WTC11 (cell line): ENCODE measurements at regions of chr18 and their contacts with region 1.

Region 1: DNA sequence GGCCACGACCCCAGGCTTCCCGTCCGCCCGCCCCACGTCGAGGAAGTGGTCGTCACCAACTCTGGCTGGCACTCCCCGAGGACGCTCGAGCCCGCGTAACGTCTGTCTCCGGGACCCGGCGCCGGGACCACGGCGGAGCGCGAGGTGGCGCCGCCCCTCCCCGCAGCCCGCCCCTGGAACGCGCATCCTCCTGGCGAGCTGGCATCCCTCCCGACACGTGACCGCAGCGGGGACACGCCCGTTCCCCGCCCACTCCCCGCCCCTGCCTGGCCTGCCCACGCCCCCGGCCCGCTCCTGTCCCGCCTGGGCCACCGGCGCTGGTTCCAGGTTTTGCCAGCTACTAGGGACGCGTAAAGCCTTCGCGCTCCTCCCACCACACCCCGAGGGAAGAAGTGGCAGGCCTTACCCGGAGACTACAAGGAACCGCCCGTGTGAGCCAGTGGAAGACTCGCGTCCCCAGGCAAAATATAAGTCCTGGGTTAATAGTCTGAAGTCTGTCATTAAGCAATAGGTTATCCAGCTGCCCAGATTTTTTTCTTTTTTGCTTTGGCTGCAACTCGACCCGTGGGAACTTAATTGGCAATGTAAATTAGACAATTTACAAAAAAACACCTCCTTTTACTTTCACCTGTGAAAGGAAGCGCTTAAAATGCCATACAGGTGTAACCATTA is at the start of gene OSBPL1A:
- DNase-seq: peak; percentile 98
- ATAC-seq: peak; percentile 96
- H3K4me3 Mint-ChIP-seq: peak within 1 kb of the TSS; percentile 88
- H3K27ac Mint-ChIP-seq: peak within 1 kb of the TSS; percentile 94
- H3K4me1 Mint-ChIP-seq: peaks cover 59% of the 10 kb centered on the region
- H3K27me3 Mint-ChIP-seq: no peaks in the 10 kb centered on the region
- CTCF ChIP-seq: no peak
- total RNA-seq, gene OSBPL1A: 53.1 to 55.1 TPM (median 54.4 TPM) in 3 replicates

Region 2: DNA sequence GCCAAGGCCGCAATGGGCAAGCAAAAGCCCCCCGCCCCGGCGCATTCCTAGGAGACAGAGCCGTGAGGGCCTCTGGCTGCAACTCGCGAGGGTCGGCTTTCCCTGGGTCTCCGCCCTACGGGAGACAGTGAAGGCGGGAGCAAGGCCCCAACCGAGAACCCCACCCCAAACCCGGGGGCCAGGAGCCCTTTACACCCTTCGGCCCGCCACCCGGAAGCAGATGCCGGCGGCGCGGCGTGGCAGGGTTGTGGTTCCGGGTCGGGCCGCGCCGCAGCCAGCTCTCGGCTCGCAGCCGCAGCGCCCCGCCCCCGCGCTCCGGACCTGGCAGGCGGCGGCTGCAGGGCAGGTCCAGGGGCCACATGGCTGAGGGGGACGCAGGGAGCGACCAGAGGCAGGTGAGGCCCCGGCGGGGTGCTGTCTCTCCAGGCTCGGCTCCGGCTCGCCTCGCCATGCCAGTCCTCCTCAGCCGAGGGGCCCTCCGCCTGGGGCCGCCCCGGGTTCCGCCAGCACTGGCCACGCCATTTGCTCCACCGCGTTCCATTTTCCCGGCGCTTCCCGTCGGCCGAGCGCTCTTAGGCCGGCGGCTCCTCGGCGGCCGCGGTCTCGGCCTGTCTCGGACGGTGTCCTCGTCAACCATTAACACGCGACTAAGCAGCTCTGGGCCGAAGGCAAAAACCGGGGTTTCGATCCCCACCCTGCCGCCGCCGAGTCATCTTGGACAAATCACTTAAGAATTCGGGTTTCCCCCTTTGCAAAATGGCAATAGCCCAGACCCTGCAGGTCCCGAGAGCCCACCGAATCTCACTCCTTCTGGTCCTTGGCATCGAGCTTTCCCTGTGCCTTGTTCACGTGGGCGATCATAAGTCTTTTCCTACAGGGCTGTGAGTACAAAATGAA is 28.8 kb after region 1 on chr18 and contains the start of gene IMPACT:
- CTCF ChIA-PET with region 1: interaction called, 7 read pairs
- POLR2A ChIA-PET with region 1: interaction called, 13 read pairs
- DNase-seq: peak; percentile 87
- ATAC-seq: peak; percentile 93
- H3K4me3 Mint-ChIP-seq: peak within 1 kb of the TSS; percentile 93
- H3K27ac Mint-ChIP-seq: peak within 1 kb of the TSS; percentile 100
- H3K4me1 Mint-ChIP-seq: peaks cover 21% of the 10 kb centered on the region
- H3K27me3 Mint-ChIP-seq: peaks cover 8% of the 10 kb centered on the region
- CTCF ChIP-seq: no peak
- total RNA-seq, gene IMPACT: 48.0 to 48.8 TPM (median 48.3 TPM) in 3 replicates

Region 3: GRCh38 chr18:24595561-24596031 is 197.8 kb after region 1 on chr18:
- CTCF ChIA-PET with region 1: no interaction called
- POLR2A ChIA-PET with region 1: no interaction called
- DNase-seq: no peak
- ATAC-seq: no peak
- H3K4me3 Mint-ChIP-seq: no peak overlapping the region
- H3K27ac Mint-ChIP-seq: no peak overlapping the region
- H3K4me1 Mint-ChIP-seq: no peaks in the 10 kb centered on the region
- H3K27me3 Mint-ChIP-seq: no peaks in the 10 kb centered on the region
- CTCF ChIP-seq: no peak

Region 4: DNA sequence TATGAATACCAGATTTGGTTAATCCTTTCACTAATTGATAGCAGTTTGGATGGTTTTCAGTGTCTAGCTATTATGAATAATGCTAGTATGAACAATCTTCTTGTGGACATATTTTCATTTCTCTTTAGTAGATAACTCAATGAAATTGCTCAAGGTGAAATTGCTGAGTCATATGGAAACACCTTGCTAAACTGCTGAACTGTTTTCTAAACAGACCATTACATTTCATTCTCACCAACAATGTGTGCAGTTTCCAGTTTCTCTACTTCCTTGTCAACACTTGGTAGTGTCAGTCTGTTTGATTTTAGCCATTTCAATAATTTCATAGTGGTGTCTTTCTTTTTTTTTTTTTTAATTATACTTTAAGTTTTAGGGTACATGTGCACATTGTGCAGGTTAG is 312.6 kb after region 1 on chr18:
- CTCF ChIA-PET with region 1: no interaction called
- POLR2A ChIA-PET with region 1: no interaction called
- DNase-seq: no peak
- ATAC-seq: no peak
- H3K4me3 Mint-ChIP-seq: no peak overlapping the region
- H3K27ac Mint-ChIP-seq: no peak overlapping the region
- H3K4me1 Mint-ChIP-seq: no peaks in the 10 kb centered on the region
- H3K27me3 Mint-ChIP-seq: no peaks in the 10 kb centered on the region
- CTCF ChIP-seq: no peak